ENCODE measurements at regions of chr1 and their contacts with region 1.

Region 1: GRCh38 chr1:16146279-16147155 is 9.4 kb downstream of the EPHA2 start:
- DNase-seq: peak; percentile 89
- H3K4me3 ChIP-seq: peak overlapping the region in 3 of 4 donors; percentile 35 to 48 (median 40)
- H3K27ac ChIP-seq: peak overlapping the region; percentile 72 to 83 (median 82)
- H3K4me1 ChIP-seq: peaks cover 0 to 47% (median 41%) of the 10 kb centered on the region in 4 donors
- H3K27me3 ChIP-seq: no peaks in the 10 kb centered on the region
- CTCF ChIP-seq: no peak
- EP300 ChIP-seq: no peak
- POLR2A ChIP-seq: no peak

Region 2: GRCh38 chr1:16181887-16182719 is 35.6 kb after region 1 on chr1:
- intact Hi-C with region 1: loop called (anchors 5 kb)
- DNase-seq: peak; percentile 97
- H3K4me3 ChIP-seq: no peak overlapping the region
- H3K27ac ChIP-seq: peak overlapping the region; percentile 85 to 92 (median 90)
- H3K4me1 ChIP-seq: peaks cover 0 to 57% (median 50%) of the 10 kb centered on the region in 4 donors
- H3K27me3 ChIP-seq: no peaks in the 10 kb centered on the region
- CTCF ChIP-seq: no peak
- EP300 ChIP-seq: no peak
- POLR2A ChIP-seq: no peak

Measured in sigmoid colon (tissue), 7 donors.